ENCODE measurements at regions of chr3 and their contacts with region 1.

Region 1: GRCh38 chr3:184469423-184469822 is 89.6 kb downstream of the CHRD start:
- DNase-seq: peak; percentile 73
- ATAC-seq: no peak
- H3K4me3 Mint-ChIP-seq: no peak overlapping the region
- H3K27ac Mint-ChIP-seq: no peak overlapping the region
- H3K4me1 Mint-ChIP-seq: peaks cover 16% of the 10 kb centered on the region
- H3K27me3 Mint-ChIP-seq: peaks cover 10% of the 10 kb centered on the region

Region 2: DNA sequence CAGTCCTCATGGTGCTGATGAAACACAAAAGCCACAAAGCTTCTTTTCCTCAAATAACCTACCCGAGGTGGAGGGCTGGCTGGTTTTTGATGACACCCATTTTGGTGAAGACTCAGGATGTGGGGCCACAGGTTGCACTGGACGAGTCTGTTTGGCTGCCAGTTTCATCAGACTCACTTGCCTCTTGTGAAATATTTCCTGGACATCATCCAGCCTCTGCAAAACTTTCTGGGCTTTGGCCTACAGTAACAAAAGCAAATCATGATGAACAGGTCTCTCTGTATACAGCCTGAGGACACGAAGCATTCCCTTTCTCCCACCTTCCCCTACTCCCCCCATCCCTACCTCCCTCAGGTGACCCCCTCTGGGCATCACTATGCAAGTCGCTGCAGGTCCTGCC is 1174.2 kb before region 1 on chr3:
- CTCF ChIA-PET with region 1: no interaction called
- POLR2A ChIA-PET with region 1: no interaction called
- intact Hi-C with region 1: no loop called
- DNase-seq: no peak
- ATAC-seq: no peak
- H3K4me3 Mint-ChIP-seq: no peak overlapping the region
- H3K27ac Mint-ChIP-seq: no peak overlapping the region
- H3K4me1 Mint-ChIP-seq: no peaks in the 10 kb centered on the region
- H3K27me3 Mint-ChIP-seq: no peaks in the 10 kb centered on the region

Region 3: DNA sequence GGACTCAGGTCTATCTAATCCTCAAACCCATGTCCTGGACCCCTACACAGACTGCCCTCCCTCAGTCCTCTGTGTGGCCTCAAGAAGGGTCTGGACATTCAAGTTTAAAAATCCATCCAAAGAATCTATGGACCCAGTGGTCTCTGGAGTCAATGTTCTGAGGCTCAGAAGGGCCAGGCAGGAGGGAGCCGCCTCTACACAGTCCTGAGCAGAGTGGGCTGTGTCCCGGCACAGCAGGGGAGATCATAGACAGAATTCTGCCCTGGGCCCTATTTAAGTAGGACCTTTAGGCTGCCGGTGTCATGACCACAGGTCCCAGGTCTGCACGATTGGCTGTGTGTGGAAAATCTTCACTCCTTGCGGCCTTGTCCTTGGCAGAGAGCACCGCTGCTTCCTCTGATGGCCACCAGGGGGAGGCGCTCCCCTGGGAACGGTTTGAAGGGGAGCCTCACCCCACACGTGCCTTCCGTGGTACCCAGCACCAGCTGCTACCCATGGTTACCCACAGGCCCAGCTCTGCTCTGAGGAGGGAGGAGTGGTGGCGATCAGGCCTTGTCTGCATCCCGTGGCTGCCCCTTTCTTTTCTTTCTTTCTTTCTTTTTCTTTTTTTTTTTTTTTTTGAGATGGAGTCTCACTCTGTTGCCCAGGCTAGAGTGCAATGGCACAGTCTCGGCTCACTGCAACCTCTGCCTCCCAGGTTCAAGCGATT is 51.6 kb before region 1 on chr3:
- CTCF ChIA-PET with region 1: no interaction called
- POLR2A ChIA-PET with region 1: no interaction called
- intact Hi-C with region 1: loop called in 1 of 2 experiments (anchors 1 kb)
- DNase-seq: peak; percentile 86
- ATAC-seq: peak; percentile 97
- H3K4me3 Mint-ChIP-seq: no peak overlapping the region
- H3K27ac Mint-ChIP-seq: no peak overlapping the region
- H3K4me1 Mint-ChIP-seq: peaks cover 2% of the 10 kb centered on the region
- H3K27me3 Mint-ChIP-seq: no peaks in the 10 kb centered on the region

Region 4: DNA sequence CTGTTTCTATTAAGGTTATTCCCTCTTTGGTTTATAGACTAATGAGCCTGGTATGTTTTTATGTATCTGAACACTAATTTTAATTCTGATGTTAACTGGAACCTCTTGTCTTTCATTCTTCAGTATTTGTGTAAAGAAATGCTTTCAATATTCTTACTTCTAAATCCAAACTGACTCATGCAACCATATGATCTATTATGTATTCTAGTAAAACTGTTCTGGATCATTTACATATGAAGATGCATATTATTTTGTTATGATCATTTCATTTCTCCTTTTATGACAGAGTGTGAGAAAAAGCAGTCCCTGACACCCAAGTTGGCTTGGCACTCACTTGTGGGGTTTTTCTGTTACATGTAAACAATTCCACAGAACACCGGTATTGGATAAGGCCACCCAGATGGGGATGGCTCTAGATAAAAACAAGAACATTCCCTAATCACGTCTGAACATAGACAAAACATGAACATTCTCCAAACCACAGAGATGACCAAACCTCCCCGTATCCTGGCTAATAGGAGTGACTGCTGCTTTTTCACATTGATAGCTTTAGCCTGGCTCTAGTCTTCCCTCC is 19.9 kb after region 1 on chr3:
- CTCF ChIA-PET with region 1: no interaction called
- POLR2A ChIA-PET with region 1: no interaction called
- intact Hi-C with region 1: no loop called
- DNase-seq: no peak
- ATAC-seq: no peak
- H3K4me3 Mint-ChIP-seq: no peak overlapping the region
- H3K27ac Mint-ChIP-seq: no peak overlapping the region
- H3K4me1 Mint-ChIP-seq: peaks cover 5% of the 10 kb centered on the region
- H3K27me3 Mint-ChIP-seq: peaks cover 37% of the 10 kb centered on the region